Psoas muscle (tissue), 8 donors: ENCODE measurements at regions of chr21 and their contacts with region 1.

Region 1: GRCh38 chr21:37273911-37274690 is 7.0 kb upstream of the VPS26C start:
- DNase-seq: no peak
- ATAC-seq: no peak
- H3K4me3 ChIP-seq: no peak overlapping the region
- H3K27ac ChIP-seq: no peak overlapping the region
- H3K4me1 ChIP-seq: no peaks in the 10 kb centered on the region
- H3K27me3 ChIP-seq: no peaks in the 10 kb centered on the region
- CTCF ChIP-seq: no peak

Region 2: GRCh38 chr21:37176711-37177110 is 97.4 kb before region 1 on chr21:
- intact Hi-C with region 1: no loop called
- DNase-seq: no peak
- ATAC-seq: peak in 1 of 4 donors; percentile 25
- H3K4me3 ChIP-seq: no peak overlapping the region
- H3K27ac ChIP-seq: peak overlapping the region; percentile 14
- H3K4me1 ChIP-seq: peaks cover 6% of the 10 kb centered on the region
- H3K27me3 ChIP-seq: no peaks in the 10 kb centered on the region
- CTCF ChIP-seq: no peak

Region 3: DNA sequence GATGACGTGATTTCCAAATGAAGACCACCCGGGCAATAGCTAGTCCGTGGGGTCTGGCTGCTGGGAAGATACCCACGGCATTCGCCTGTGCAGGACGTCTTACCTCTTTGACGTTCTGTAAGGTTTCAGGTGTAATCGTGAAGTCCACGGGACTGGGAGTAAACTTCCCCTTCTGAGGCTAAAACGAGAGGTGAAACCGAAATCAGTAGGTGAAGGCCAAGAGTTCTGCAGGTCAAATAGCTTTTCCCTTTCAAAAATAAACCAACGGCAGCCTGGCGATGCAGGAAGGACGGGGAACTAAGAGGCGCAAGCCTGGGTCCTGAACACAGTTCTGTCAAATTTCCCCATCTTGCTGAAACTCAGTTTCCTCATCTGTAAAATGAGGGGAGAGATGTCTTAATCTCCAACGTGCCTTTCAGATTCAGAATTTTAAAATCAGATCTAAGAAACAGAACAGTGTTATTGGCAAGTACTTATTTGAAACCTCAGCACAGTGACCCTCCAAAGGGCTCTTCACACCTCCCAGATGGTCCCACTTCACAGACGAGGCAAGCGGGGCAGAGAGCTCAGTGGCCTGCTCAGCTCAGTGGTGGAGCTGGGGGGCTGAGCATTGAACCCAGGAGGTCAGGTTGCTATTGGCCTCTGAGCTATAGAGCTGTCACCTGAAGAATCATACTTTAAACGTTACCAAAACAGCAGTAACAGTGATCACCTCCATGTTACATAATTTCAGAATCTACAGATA is 41.7 kb before region 1 on chr21:
- intact Hi-C with region 1: no loop called
- DNase-seq: no peak
- ATAC-seq: no peak
- H3K4me3 ChIP-seq: no peak overlapping the region
- H3K27ac ChIP-seq: no peak overlapping the region
- H3K4me1 ChIP-seq: no peaks in the 10 kb centered on the region
- H3K27me3 ChIP-seq: no peaks in the 10 kb centered on the region
- CTCF ChIP-seq: no peak

Region 4: DNA sequence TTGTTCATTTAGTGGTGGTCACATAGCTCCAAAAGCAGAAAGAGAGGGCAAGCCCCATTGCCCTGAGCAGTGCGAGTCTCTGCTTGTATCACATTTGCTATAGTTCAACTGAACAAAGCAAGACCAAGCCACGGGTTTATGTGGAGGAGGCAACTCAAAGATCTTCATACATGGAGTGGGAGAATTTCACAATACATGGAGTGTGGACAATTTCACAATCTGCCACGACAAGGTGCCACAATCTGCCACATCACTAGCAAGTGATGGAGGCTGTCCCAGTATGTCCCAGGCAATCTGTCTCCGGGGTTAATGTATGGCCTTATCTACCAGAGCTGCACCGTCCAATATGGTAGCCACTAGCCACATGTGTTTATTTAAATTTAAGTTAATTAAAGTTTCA is 48.0 kb after region 1 on chr21:
- intact Hi-C with region 1: loop called in 1 of 2 experiments (anchors 5 kb)
- DNase-seq: no peak
- ATAC-seq: no peak
- H3K4me3 ChIP-seq: no peak overlapping the region
- H3K27ac ChIP-seq: no peak overlapping the region
- H3K4me1 ChIP-seq: no peaks in the 10 kb centered on the region
- H3K27me3 ChIP-seq: no peaks in the 10 kb centered on the region
- CTCF ChIP-seq: no peak

Region 5: DNA sequence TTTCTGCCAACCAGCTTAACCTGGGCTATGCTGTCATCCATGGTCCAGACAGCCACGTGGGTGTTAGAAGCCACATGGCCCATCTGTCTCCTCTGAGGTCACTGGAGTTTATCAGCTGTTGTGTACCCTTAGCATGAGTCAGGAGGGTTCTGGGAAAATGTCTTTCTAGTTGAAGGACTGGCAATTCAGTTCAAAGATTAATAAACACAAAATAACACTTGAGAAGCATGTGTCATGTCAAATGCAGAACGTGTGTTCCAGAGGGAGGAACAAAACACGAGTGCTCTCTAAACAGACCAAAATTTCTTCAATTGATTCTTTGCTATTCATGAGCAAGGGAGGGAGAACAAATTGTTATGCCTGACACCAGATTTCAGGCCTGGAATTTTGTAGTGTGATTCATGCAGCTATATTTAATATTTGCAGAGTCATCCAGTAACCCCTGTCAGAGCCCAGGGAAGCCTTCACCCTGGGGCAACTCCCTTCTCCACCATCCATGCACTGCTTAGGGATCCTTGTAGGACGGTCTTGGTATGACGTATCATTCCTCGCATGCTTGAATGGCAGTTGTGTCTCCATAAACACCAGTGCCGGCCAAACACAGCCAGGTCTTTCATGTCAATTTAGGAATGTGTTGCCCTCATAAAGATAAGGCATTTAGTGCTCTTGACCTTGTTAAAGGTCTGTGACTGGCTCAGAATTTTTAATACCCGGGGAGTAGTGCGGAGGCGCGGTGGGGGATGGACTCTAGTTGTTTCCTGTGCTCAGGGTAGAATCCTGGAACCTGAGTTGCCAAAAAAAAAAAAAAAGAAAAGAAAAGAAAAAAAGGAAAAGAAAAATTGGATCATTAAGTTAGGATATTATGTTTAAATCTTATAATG is 64.8 kb after region 1 on chr21:
- intact Hi-C with region 1: loop called in 1 of 2 experiments (anchors 10 kb)
- DNase-seq: peak; percentile 49 to 78
- ATAC-seq: peak; percentile 97 to 99 (median 98)
- H3K4me3 ChIP-seq: peak overlapping the region; percentile 37
- H3K27ac ChIP-seq: peak overlapping the region; percentile 90
- H3K4me1 ChIP-seq: peaks cover 4% of the 10 kb centered on the region
- H3K27me3 ChIP-seq: no peaks in the 10 kb centered on the region
- CTCF ChIP-seq: no peak